Spleen (tissue), 13 donors: ENCODE measurements at regions of chr9 and their contacts with region 1.

Region 1: DNA sequence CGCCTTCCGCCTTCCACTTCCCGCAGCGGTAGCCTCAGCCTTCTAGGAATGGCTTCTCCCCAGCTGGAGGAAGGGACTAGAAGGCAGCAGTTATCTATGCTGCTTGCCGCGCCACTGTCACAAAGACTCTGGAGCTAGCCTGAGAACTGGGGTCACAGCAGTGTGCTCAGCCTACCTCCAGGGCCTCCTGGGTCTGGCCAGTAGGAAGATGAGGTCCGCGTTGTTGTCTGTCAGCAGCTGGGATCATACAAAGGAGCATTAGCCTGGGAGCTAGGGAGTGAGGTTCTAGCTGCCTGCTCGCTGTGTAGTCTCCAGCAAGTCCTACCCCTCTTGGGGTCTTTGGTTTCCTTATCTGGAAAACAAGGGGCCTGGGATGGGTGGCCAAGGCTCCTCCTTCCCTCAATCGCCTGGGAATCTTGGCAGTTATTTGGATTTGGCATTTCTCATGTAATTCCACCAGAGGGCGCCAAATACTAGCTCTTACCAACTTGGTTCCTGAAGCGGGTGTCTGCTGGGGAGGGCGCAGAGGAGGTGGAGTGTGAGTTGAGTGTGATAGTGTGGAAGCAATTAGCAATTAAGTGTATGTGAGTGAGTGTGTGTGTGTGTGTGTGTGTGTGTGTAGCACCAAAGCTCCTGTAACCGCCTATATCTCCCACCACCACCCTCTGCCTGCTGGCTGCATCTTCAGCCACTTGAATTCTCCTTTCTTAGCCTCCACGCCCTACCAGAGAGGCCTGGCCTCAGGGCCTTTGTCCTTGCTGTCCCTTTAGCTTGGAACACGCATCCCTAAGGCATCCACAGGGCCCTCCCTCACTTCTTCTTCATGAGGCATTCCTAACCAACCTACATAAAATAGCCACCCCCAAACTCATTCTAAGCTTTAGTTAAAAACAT is 97.1 kb downstream of the ENTREP1 start:
- DNase-seq: no peak
- H3K4me3 ChIP-seq: no peak overlapping the region
- H3K27ac ChIP-seq: no peak overlapping the region
- H3K4me1 ChIP-seq: no peaks in the 10 kb centered on the region
- H3K27me3 ChIP-seq: peaks cover 0 to 20% (median 0%) of the 10 kb centered on the region in 7 donors
- CTCF ChIP-seq: peak; percentile 47 to 83 (median 77)
- POLR2A ChIP-seq: no peak

Region 2: GRCh38 chr9:69549310-69550202 is 127.4 kb after region 1 on chr9:
- intact Hi-C with region 1: loop called (anchors 10 kb)
- DNase-seq: no peak
- H3K4me3 ChIP-seq: no peak overlapping the region
- H3K27ac ChIP-seq: no peak overlapping the region
- H3K4me1 ChIP-seq: peaks cover 0 to 8% (median 1%) of the 10 kb centered on the region in 6 donors
- H3K27me3 ChIP-seq: no peaks in the 10 kb centered on the region
- CTCF ChIP-seq: peak in 10 of 11 experiments; percentile 46 to 84 (median 68)
- POLR2A ChIP-seq: no peak

Region 3: DNA sequence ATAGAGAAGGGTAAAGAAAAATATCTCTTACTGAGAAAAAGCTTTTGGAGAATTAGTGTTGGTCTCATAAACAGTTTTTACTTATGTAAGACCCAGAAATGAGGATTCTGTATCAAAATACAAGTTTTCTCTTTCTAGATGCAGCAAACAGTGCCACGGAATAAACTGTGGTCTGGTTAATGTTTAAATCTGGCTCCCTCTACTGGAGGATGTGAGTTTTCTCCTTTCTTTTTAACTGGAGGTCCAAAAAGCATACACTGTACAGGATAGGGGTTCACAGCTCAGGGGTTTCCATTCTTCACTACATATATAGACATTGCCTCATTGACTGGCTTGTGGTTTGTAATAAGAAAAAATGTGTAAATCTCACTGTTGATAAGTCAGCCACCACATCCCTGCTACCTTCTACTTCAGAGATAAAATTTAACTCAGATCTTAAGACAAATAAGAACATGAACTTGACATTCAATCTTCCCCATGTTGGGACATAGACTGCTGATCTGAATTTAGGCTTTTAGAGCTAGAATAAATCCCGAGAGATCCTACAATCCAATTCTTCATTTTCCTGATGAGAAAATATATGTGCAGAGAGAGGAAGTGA is 497.4 kb after region 1 on chr9:
- intact Hi-C with region 1: loop called (anchors 10 kb)
- DNase-seq: no peak
- H3K4me3 ChIP-seq: no peak overlapping the region
- H3K27ac ChIP-seq: no peak overlapping the region
- H3K4me1 ChIP-seq: no peaks in the 10 kb centered on the region
- H3K27me3 ChIP-seq: peaks cover 0 to 18% (median 0%) of the 10 kb centered on the region in 7 donors
- CTCF ChIP-seq: peak in 9 of 11 experiments; percentile 19 to 67 (median 54)
- POLR2A ChIP-seq: no peak